ENCODE measurements at regions of chr17 and their contacts with region 1.

Region 1: DNA sequence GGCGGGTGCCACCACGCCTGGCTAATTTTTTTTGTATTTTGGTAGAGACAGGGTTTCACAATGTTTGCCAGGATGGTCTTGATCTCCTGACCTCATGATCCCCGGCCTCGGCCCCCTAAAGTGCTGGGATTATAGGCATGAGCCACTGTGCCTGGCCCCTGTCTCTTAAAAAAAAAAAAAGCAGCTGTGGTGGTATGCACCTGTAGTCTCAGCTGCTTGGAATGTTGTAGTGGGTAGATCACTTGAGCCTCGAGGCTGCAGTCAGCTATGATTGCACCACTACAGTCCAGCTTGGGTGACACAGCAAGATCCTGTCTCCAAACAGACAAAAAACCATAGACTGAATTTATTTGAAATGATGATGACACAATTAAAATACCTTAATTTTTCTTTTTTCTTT is 24.3 kb downstream of the CDK12 start:
- DNase-seq: no peak
- ATAC-seq: no peak
- H3K4me3 ChIP-seq: no peak overlapping the region
- H3K27ac ChIP-seq: no peak overlapping the region
- H3K4me1 ChIP-seq: no peaks in the 10 kb centered on the region
- H3K27me3 ChIP-seq: no peaks in the 10 kb centered on the region
- CTCF ChIP-seq: no peak
- POLR2A ChIP-seq: no peak

Region 2: GRCh38 chr17:39429600-39429999 is 56.0 kb before region 1 on chr17:
- intact Hi-C with region 1: loop called (anchors 10 kb)
- DNase-seq: no peak
- ATAC-seq: no peak
- H3K4me3 ChIP-seq: no peak overlapping the region
- H3K27ac ChIP-seq: no peak overlapping the region
- H3K4me1 ChIP-seq: no peaks in the 10 kb centered on the region
- H3K27me3 ChIP-seq: no peaks in the 10 kb centered on the region
- CTCF ChIP-seq: no peak
- POLR2A ChIP-seq: no peak

Region 3: DNA sequence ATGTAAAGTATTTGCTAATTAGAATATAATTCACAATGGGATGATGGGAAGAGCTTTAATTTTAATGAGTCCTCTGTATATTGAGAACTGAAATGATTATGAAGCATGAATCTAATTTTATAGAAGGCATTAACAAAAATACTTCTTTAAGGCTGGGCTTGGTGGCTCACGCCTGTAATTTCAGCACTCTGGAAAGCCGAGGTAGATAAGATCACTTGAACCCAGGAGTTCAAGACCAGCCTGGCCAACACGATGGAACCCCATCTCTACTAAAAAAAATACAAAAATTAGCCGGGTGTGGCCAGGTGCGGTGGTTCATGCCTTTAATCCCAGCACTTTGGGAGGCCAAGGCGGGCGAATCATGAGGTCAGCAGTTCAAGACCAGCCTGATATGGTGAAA is 12.2 kb before region 1 on chr17:
- intact Hi-C with region 1: no loop called
- DNase-seq: no peak
- ATAC-seq: no peak
- H3K4me3 ChIP-seq: no peak overlapping the region
- H3K27ac ChIP-seq: no peak overlapping the region
- H3K4me1 ChIP-seq: no peaks in the 10 kb centered on the region
- H3K27me3 ChIP-seq: no peaks in the 10 kb centered on the region
- CTCF ChIP-seq: no peak
- POLR2A ChIP-seq: no peak

Region 4: DNA sequence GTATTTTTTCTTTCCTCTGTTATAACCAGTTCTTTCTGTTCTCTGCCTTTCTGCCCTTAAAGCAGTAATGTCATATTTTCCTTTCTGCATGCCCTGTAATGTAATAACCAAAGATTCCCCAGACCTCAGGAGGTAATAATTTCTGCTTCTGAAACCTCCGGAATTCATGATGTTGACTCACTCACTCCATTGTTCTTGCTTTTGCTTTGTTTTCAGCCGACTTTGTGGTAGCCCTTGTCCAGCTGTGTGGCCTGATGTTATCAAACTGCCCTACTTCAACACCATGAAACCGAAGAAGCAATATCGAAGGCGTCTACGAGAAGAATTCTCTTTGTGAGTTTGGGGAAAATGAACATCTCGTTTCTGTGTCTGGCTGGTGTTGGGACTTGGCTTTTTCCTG is 31.7 kb after region 1 on chr17:
- intact Hi-C with region 1: no loop called
- DNase-seq: no peak
- ATAC-seq: no peak
- H3K4me3 ChIP-seq: no peak overlapping the region
- H3K27ac ChIP-seq: no peak overlapping the region
- H3K4me1 ChIP-seq: no peaks in the 10 kb centered on the region
- H3K27me3 ChIP-seq: no peaks in the 10 kb centered on the region
- CTCF ChIP-seq: no peak
- POLR2A ChIP-seq: no peak